ENCODE measurements at regions of chr10 and their contacts with region 1.

Region 1: GRCh38 chr10:32378363-32379317 is 31.7 kb upstream of the EPC1 start:
- DNase-seq: peak; percentile 69 to 95 (median 91)
- ATAC-seq: peak; percentile 97
- H3K4me3 ChIP-seq: peak overlapping the region; percentile 92
- H3K4me3 Mint-ChIP-seq: no peak overlapping the region
- H3K27ac ChIP-seq: peak overlapping the region; percentile 91
- H3K27ac Mint-ChIP-seq: no peak overlapping the region
- H3K4me1 ChIP-seq: peaks cover 4 to 11% of the 10 kb centered on the region in 2 donors
- H3K4me1 Mint-ChIP-seq: peaks cover 12 to 21% (median 20%) of the 10 kb centered on the region in 7 donors
- H3K27me3 ChIP-seq: no peaks in the 10 kb centered on the region
- H3K27me3 Mint-ChIP-seq: no peaks in the 10 kb centered on the region

Region 2: DNA sequence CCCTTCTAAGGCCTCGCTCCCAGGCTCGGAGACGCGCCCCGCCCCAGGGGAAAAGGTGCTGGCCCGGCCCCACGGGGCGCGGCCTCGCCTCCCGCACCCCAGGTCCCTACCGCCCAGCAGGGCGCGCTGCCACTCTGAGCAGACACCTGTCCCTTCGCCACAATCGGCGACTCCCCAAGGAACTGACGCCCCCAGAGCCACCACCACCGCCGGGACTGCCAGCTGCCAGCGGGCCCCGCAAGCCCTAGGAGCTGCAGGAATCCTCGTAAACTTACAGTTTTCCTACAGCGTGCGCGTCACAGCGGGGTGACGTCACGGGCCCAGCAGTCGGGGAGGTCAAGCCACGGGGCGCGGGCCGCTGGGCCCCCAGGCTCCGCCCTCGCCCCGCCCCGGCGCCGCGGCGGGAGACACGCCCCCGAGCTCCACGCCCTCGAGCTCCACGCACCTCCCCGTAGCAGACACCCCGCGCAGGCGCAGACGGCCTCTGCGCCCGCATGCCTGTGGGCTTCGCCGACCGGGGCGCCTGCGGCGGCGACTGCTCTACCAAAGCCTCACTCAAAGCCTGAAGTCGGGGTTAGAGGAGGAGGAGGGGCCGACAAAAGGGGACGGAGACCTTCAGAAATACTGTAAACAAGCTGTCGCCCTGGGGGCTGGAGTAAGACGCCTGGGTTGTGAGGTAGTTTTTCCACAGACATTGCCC is 1346.9 kb before region 1 on chr10 and contains the start of gene ZNF438:
- CTCF ChIA-PET with region 1: no interaction called
- POLR2A ChIA-PET with region 1: no interaction called
- intact Hi-C with region 1: loop called in 1 of 2 experiments (anchors 2 kb)
- DNase-seq: peak; percentile 93 to 99 (median 96)
- ATAC-seq: peak; percentile 92
- H3K4me3 ChIP-seq: peak within 1 kb of the TSS; percentile 84
- H3K4me3 Mint-ChIP-seq: peak within 1 kb of the TSS; percentile 89 to 94 (median 92)
- H3K27ac ChIP-seq: peak within 1 kb of the TSS; percentile 96
- H3K27ac Mint-ChIP-seq: peak within 1 kb of the TSS; percentile 93 to 99 (median 99)
- H3K4me1 ChIP-seq: peaks cover 5% of the 10 kb centered on the region in 2 donors
- H3K4me1 Mint-ChIP-seq: peaks cover 7 to 34% (median 14%) of the 10 kb centered on the region in 7 donors
- H3K27me3 ChIP-seq: no peaks in the 10 kb centered on the region
- H3K27me3 Mint-ChIP-seq: no peaks in the 10 kb centered on the region
- total RNA-seq, gene ZNF438: 3.9 to 5.8 (median 4.0) TPM

Region 3: DNA sequence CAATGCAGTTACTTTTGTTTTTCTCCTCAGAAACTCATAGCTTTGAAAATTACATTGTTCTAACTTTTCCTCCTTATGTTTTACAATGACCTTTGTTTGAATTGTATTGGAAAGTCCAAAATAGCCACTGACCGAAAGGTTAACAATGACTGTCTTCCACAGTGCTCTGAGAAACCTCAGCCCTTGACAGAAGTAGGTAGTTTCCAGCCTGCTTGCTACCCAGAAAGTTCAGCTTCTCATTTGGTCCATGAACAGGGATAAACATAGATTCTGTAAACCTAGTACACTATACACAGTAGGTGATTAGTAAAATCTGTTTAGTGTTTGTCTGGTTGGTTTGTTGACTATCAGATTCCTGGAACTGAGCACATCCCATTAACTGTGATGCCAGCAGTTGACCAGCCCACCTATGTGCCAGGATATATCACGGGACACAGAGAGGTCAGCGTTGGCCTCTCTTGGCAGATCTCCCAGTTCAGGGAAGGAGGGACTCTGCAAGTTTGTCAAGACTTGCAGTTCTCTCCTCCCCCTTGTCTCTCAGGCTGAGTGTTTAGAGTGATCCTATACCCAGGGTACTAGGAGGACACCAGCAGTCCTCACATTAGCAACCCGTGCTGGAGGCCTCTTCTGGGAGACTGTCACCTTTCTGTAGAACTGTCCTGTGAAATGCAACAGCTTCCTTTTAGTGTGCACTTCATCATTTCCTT is 747.6 kb before region 1 on chr10:
- CTCF ChIA-PET with region 1: no interaction called
- POLR2A ChIA-PET with region 1: no interaction called
- intact Hi-C with region 1: no loop called
- DNase-seq: no peak
- ATAC-seq: no peak
- H3K4me3 ChIP-seq: no peak overlapping the region
- H3K4me3 Mint-ChIP-seq: no peak overlapping the region
- H3K27ac ChIP-seq: no peak overlapping the region
- H3K27ac Mint-ChIP-seq: no peak overlapping the region
- H3K4me1 ChIP-seq: no peaks in the 10 kb centered on the region
- H3K4me1 Mint-ChIP-seq: no peaks in the 10 kb centered on the region
- H3K27me3 ChIP-seq: no peaks in the 10 kb centered on the region
- H3K27me3 Mint-ChIP-seq: peaks cover 0 to 27% (median 7%) of the 10 kb centered on the region in 5 donors

Region 4: DNA sequence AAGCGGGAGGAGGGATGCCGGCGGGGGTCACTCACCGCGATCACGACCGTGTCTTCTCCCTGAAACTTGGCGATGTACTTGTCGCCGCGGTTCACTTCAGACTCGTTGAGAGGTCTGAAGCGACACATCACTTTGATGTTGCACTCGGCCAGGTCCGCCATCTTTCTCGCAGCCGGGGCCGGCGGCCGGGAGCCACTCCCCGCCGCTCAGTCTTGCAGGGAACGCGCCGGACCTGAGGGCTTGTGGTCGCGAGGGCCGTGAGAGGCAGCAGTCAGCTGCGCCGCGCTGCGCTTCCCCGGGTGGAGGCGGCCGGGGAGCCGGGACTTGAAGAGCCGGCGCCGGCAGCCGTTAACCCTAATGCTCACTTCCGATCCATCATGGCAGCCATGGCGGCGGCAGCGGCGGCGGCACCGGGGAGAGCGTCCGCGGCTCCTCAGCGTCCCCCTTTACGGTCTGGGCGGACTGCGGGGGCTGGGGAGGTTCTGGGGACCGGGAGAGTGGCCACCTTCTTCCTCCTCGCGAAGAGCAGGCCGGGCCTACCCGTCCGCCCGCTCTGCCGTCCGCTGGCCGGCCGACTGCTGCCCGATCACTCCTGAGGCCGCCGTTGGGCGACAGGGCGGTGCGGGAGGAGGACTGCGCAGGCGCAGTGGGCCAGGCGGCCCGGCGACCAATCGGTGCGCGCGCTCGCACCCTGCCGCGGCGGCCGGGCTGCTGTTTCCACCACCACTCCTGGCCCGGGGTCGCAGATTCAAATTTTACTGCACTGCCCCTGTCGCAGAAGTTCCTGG is 322.6 kb before region 1 on chr10 and contains the start of gene KIF5B:
- CTCF ChIA-PET with region 1: no interaction called
- POLR2A ChIA-PET with region 1: interaction called, 3 read pairs
- intact Hi-C with region 1: loop called (anchors 2 kb)
- DNase-seq: peak; percentile 77 to 95 (median 90)
- ATAC-seq: peak; percentile 87
- H3K4me3 ChIP-seq: peak within 1 kb of the TSS; percentile 71
- H3K4me3 Mint-ChIP-seq: peak within 1 kb of the TSS; percentile 94 to 99 (median 96)
- H3K27ac ChIP-seq: peak within 1 kb of the TSS; percentile 83
- H3K27ac Mint-ChIP-seq: peak within 1 kb of the TSS; percentile 90 to 97 (median 93)
- H3K4me1 ChIP-seq: peaks cover 30 to 34% of the 10 kb centered on the region in 2 donors
- H3K4me1 Mint-ChIP-seq: peaks cover 33 to 55% (median 47%) of the 10 kb centered on the region in 7 donors
- H3K27me3 ChIP-seq: no peaks in the 10 kb centered on the region
- H3K27me3 Mint-ChIP-seq: no peaks in the 10 kb centered on the region
- total RNA-seq, gene KIF5B: 42.2 to 66.0 (median 46.3) TPM

Region 5: GRCh38 chr10:32445740-32446535 is 67.3 kb after region 1 on chr10 and contains the start of gene CCDC7:
- CTCF ChIA-PET with region 1: interaction called, 9 read pairs
- POLR2A ChIA-PET with region 1: interaction called, 111 read pairs
- intact Hi-C with region 1: loop called (anchors 1 kb)
- DNase-seq: peak; percentile 78 to 90 (median 88)
- ATAC-seq: peak; percentile 98
- H3K4me3 ChIP-seq: peak within 1 kb of the TSS; percentile 79
- H3K4me3 Mint-ChIP-seq: peak within 1 kb of the TSS; percentile 85 to 98 (median 94)
- H3K27ac ChIP-seq: peak within 1 kb of the TSS; percentile 95
- H3K27ac Mint-ChIP-seq: peak within 1 kb of the TSS; percentile 96 to 100 (median 99)
- H3K4me1 ChIP-seq: peaks cover 8 to 9% of the 10 kb centered on the region in 2 donors
- H3K4me1 Mint-ChIP-seq: peaks cover 2 to 35% (median 25%) of the 10 kb centered on the region in 7 donors
- H3K27me3 ChIP-seq: no peaks in the 10 kb centered on the region
- H3K27me3 Mint-ChIP-seq: peaks cover 0 to 4% (median 0%) of the 10 kb centered on the region in 5 donors
- total RNA-seq, gene CCDC7: 19.5 to 98.7 (median 69.5) TPM

Region 6: DNA sequence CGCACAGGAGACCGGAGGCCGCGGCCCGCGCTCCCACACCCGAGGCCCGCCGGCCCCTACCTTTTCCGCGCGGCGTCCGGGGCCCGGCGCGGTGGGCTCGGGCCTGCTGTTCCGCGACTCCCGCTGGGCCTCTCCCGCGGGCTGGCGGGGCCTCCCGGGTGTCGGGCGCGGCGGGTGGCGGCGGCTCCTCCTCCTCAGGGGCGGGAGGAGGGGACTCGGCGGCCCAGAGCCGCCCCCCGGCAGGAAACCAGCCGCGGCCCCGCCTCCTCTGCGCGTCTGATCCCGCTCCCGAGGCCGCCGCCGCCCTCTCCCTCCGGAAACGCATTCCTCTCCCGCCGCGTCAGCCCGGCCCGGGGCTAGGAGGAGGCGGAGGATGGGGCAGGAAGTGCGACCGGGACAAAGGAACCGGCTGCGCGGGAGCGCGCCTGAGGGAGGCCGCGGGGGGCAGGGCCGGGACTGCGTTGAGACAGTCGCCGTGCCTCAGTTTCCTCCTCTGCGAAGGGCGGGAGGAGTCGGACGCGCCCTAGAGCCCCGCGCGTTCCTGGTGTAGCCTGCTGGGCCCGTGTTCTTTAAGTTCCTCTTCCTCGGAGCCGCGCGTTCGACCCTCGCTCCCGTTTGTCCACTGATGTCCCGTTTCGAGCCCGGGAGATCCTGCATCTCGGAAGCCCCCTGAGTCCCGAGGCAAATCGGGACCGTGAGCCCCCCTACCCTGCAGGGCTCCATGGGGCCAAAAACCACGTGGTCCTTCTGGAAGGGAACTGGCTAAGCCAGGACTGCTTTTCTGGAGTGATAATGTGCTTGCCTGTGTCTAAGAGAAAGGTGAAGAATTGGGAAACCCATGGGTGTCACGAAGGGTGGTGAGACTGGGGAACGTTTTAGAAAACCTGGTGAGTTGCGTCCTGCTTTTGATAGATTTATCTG is 579.7 kb after region 1 on chr10 and contains the start of gene ITGB1:
- CTCF ChIA-PET with region 1: no interaction called
- POLR2A ChIA-PET with region 1: no interaction called
- intact Hi-C with region 1: loop called (anchors 2 kb)
- DNase-seq: peak; percentile 73 to 91 (median 82)
- ATAC-seq: peak; percentile 95
- H3K4me3 ChIP-seq: peak within 1 kb of the TSS; percentile 88
- H3K4me3 Mint-ChIP-seq: peak within 1 kb of the TSS; percentile 78 to 95 (median 88)
- H3K27ac ChIP-seq: peak within 1 kb of the TSS; percentile 68
- H3K27ac Mint-ChIP-seq: peak within 1 kb of the TSS; percentile 74 to 90 (median 82)
- H3K4me1 ChIP-seq: peaks cover 7 to 8% of the 10 kb centered on the region in 2 donors
- H3K4me1 Mint-ChIP-seq: peaks cover 29 to 60% (median 54%) of the 10 kb centered on the region in 7 donors
- H3K27me3 ChIP-seq: no peaks in the 10 kb centered on the region
- H3K27me3 Mint-ChIP-seq: peaks cover 0 to 13% (median 0%) of the 10 kb centered on the region in 5 donors
- total RNA-seq, gene ITGB1: 43.2 to 205 (median 60.8) TPM

Region 7: DNA sequence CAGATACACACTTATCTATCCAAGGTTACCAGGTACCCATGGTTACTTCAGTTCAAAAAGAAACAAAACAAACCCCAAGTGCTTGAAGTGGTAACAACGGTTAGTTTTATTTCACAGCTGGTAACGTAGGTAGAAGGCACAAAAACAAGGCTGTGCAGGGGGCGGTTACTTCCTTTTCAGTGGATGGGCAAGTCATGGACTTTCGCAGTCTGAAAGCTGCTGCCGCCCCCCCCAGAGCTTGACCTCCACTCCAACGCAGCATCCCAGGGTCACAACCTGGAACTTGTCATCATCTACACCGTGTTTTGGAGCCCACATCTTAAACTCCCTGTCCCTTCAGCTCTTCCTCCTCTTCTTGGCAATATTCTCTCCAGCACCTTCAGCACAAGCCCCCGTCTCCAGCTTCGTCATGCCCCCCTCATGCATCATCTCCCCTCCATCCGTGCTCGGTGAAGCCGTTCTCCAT is 760.6 kb after region 1 on chr10:
- CTCF ChIA-PET with region 1: interaction called, 3 read pairs
- POLR2A ChIA-PET with region 1: no interaction called
- intact Hi-C with region 1: loop called (anchors 1 to 2 kb)
- DNase-seq: peak; percentile 63 to 97 (median 95)
- ATAC-seq: peak; percentile 90
- H3K4me3 ChIP-seq: peak overlapping the region; percentile 31
- H3K4me3 Mint-ChIP-seq: peak overlapping the region; percentile 71 to 87 (median 80)
- H3K27ac ChIP-seq: peak overlapping the region; percentile 65
- H3K27ac Mint-ChIP-seq: peak overlapping the region; percentile 92 to 100 (median 96)
- H3K4me1 ChIP-seq: peaks cover 41 to 65% of the 10 kb centered on the region in 2 donors
- H3K4me1 Mint-ChIP-seq: peaks cover 30 to 77% (median 67%) of the 10 kb centered on the region in 7 donors
- H3K27me3 ChIP-seq: no peaks in the 10 kb centered on the region
- H3K27me3 Mint-ChIP-seq: no peaks in the 10 kb centered on the region